ENCODE measurements at regions of chr9 and their contacts with region 1.

Region 1: DNA sequence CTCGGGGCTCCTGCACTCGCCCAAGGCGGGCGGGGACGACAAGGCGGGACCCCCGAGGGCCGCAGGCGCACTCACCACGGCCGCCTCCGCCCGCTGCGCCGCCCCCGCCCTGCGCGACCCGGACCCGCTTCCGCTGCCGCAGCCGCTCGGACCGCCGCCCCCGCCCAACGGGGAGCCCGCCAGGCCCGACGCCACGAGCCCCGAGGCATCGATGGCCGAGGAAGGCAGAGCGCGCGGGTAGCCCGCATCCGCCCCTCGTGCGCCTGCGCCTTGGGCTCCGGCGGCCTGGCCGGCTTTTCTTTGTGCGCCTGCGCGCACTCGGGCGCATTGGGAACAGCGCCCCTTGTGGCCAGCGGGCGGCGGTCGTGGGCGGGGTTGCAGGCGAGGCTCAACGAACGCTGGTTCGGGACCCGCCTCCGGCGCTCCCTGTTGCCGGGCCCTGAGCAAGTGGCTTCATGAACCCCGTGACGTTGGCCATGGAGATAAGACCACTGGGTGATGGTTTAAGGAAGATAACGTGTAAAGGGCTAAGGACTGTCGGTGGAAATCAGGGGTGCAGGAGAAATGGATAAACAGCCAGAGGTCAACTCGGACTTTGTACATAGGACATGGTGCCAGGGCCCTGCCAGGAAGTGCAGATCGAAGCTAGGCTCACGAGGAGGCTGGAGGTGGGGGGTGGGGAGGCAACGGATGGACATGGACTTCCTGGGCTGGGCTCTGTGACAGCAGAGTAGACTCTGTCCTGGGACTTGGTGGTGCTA is at the starts of genes C8G and FBXW5:
- DNase-seq: peak; percentile 94 to 95
- H3K4me3 ChIP-seq: peak within 1 kb of the TSS; percentile 71 to 94 (median 87)
- H3K27ac ChIP-seq: peak within 1 kb of the TSS; percentile 62 to 80 (median 74)
- H3K4me1 ChIP-seq: peaks cover 38 to 58% of the 10 kb centered on the region in 2 donors
- H3K27me3 ChIP-seq: no peaks in the 10 kb centered on the region
- CTCF ChIP-seq: peak; percentile 80 to 99 (median 99)
- POLR2A ChIP-seq: peak; percentile 40 to 79
- total RNA-seq, gene C8G: 1.8 TPM in 1 of 4 donors, not detected in the others
- total RNA-seq, gene FBXW5: 138 to 282 (median 203) TPM

Region 2: DNA sequence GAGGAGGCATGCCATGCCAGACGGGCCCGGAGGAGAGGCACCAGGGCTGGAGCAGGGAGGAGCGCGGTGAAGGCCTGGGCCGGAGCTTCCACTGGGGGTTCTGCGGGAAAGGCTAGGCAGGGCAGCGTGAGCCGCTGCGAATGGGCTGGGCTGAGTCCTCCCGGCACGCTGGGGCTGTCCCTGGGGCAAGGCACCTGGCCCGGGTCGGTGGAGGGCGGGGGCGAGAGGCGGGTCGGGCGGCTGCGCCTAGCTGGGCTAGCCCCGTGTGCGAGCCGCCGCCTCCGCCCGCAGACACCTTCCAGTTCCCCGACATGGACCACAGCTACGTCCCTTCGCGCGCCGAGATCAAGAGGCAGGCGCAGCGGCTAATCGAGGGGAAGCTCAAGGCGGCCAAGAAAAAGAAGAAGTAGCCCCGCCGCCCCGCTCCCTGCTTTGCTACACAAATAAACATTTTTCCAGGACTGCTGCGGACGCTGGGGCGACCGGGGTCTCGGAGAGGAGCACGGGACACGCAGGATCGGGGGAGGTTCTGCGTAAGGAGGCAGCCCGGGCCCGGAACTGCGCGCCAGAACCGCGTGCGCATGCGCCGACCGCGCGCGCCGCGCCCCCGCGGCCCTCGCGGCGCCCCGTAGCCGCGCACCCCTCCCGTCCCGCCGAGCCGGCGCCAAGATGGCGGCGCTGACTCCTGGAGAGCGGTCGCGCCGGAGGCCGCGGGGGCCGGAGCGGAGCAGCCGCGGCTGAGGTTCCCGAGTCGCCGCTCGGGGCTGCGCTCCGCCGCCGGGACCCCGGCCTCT is 137.2 kb before region 1 on chr9 and contains the start of gene RABL6:
- intact Hi-C with region 1: loop called (anchors 5 kb)
- DNase-seq: peak; percentile 69 to 70
- H3K4me3 ChIP-seq: peak within 1 kb of the TSS; percentile 16 to 99 (median 92)
- H3K27ac ChIP-seq: peak within 1 kb of the TSS; percentile 69 to 91 (median 89)
- H3K4me1 ChIP-seq: peaks cover 23 to 33% of the 10 kb centered on the region in 2 donors
- H3K27me3 ChIP-seq: no peaks in the 10 kb centered on the region
- CTCF ChIP-seq: peak in 1 of 6 experiments; percentile 3
- POLR2A ChIP-seq: peak; percentile 9 to 83
- total RNA-seq, gene RABL6: 59.8 to 84.0 (median 62.2) TPM

Region 3: GRCh38 chr9:136849038-136849959 is 95.4 kb before region 1 on chr9 and contains the start of gene PHPT1:
- intact Hi-C with region 1: loop called (anchors 5 kb)
- DNase-seq: peak; percentile 99
- H3K4me3 ChIP-seq: peak within 1 kb of the TSS; percentile 54 to 79 (median 75)
- H3K27ac ChIP-seq: peak within 1 kb of the TSS; percentile 84 to 91 (median 88)
- H3K4me1 ChIP-seq: peaks cover 16 to 32% of the 10 kb centered on the region in 2 donors
- H3K27me3 ChIP-seq: no peaks in the 10 kb centered on the region
- CTCF ChIP-seq: no peak
- POLR2A ChIP-seq: peak; percentile 55 to 80
- total RNA-seq, gene PHPT1: 79.4 to 174 (median 115) TPM

Region 4: DNA sequence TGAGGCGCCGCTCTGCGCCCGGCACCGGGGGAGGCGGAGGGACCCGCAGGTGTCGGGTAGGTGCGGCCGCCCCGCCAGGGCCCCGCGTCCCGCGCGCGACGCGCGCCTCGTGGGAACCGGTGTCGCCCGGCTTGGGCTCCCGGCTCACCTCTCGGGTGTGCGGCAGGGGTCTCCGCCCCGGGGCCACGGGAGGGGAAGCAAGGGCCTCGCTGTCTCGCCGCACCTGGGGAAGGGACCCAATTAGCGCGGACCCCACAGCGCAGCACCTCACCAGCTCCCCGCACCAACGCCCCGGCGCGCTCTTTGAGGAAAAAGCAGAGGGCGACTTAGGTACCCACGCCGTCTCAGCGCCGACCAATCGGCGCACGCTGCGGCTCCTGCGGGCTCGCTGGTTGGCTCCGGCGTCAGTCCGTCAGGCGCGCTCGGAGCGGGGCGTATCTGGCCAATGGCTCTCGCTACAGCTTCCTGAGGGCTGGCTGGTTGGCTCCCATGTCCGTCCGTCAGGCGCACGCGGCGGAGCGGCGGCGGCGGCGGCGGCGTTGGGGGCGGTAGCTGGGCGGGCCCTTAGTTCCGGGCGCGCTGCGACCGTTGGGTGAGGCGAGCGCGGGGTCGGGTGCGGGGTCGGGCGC is 58.6 kb before region 1 on chr9 and contains the start of gene TRAF2:
- intact Hi-C with region 1: loop called (anchors 5 kb)
- DNase-seq: peak; percentile 97
- H3K4me3 ChIP-seq: peak within 1 kb of the TSS; percentile 46 to 95 (median 50)
- H3K27ac ChIP-seq: peak within 1 kb of the TSS; percentile 20 to 81 (median 77)
- H3K4me1 ChIP-seq: peaks cover 4 to 36% of the 10 kb centered on the region in 2 donors
- H3K27me3 ChIP-seq: no peaks in the 10 kb centered on the region
- CTCF ChIP-seq: no peak
- POLR2A ChIP-seq: peak; percentile 19 to 72
- total RNA-seq, gene TRAF2: 9.7 to 18.3 (median 15.4) TPM